Calu3 (cell line): ENCODE measurements at regions of chr6 and their contacts with region 1.

Region 1: DNA sequence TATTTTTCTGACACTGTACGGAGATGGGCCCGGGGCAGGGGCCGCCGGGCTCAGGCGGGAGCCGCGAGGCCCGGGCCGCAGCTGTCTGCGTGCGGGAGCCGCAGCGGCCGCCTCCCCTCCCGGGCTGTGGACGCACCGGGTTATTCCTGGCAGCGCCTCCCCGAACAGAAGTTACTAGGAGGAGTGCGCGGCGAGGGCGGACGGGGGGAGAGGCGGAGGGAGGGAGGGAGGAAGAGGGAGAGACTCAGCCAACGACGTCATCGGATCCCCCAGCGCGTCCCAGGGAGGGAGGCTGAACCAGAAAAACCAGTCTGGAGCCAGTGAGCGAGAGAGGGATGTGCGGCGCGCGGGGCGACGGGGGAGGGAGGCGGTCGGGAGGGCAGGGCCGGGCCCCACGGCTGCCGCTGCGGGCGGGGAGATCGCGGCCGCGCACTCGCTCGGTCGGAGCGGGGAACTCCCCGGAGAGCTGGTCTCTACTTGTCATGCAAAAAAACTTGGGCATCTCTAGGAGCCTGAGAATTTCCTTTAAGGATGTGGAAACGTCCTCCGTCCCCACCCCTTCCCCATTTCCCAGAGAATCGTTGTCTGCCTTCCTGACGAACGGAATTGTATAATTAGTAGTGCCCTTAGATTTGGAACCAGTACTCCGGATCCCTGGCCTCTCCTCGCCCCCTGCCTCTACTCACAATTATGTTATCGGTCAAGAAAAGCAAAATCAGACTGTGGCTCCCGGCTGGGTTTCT is 1.4 kb upstream of the HIVEP2 start:
- DNase-seq: peak; percentile 94
- H3K4me3 Mint-ChIP-seq: peak overlapping the region; percentile 98
- H3K27ac Mint-ChIP-seq: peak overlapping the region; percentile 79
- H3K4me1 Mint-ChIP-seq: peaks cover 23% of the 10 kb centered on the region
- H3K27me3 Mint-ChIP-seq: no peaks in the 10 kb centered on the region
- CTCF ChIP-seq: no peak

Region 2: GRCh38 chr6:142802124-142802523 is 144.2 kb before region 1 on chr6:
- CTCF ChIA-PET with region 1: no interaction called
- intact Hi-C with region 1: no loop called
- DNase-seq: peak; percentile 37
- H3K4me3 Mint-ChIP-seq: no peak overlapping the region
- H3K27ac Mint-ChIP-seq: no peak overlapping the region
- H3K4me1 Mint-ChIP-seq: peaks cover 18% of the 10 kb centered on the region
- H3K27me3 Mint-ChIP-seq: no peaks in the 10 kb centered on the region
- CTCF ChIP-seq: no peak

Region 3: DNA sequence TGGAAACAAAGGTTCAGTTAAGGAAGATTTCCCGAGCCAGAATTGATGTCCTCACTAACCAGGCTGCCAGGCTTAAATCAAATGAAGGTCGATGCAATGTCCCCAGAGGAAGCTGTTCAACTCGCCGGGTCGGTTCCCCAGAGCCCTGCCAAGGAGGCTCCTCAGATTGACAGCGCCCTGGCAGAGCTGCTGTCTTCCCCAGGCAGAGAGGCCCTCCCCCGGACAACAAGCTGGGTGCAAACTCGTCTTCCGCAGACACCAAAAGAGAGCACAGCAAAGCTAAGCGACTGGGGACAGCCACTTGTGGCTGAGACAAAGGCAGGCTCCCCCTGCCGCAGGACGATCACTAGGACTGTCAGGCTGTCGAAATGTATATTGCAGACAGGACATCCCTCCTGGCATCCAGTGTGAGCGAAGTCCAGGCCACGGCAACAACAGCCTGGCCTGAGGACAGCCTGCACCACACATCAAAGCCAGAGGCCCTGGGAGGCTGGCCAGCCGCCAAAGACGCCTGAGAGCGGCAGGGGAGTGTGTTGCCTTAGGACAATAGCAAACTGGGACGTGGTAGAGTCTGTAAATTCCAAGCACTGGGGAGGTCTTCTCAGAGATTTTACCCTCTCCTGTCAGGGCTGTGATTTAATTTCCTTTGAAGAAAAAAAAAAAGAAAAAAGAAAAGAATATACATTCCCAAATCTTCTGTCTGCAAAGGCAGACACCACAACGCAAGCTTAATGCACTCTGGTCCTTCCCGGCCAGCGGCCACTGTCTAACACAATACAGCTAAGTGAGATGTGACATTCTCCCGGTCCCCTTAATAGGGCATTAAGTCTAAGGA is 100.5 kb before region 1 on chr6:
- CTCF ChIA-PET with region 1: no interaction called
- intact Hi-C with region 1: loop called (anchors 10 kb)
- DNase-seq: peak; percentile 78
- H3K4me3 Mint-ChIP-seq: peak overlapping the region; percentile 66
- H3K27ac Mint-ChIP-seq: peak overlapping the region; percentile 93
- H3K4me1 Mint-ChIP-seq: peaks cover 82% of the 10 kb centered on the region
- H3K27me3 Mint-ChIP-seq: no peaks in the 10 kb centered on the region
- CTCF ChIP-seq: no peak

Region 4: GRCh38 chr6:142871910-142872331 is 74.4 kb before region 1 on chr6:
- CTCF ChIA-PET with region 1: no interaction called
- intact Hi-C with region 1: loop called (anchors 1 kb)
- DNase-seq: peak; percentile 66
- H3K4me3 Mint-ChIP-seq: peak overlapping the region; percentile 57
- H3K27ac Mint-ChIP-seq: peak overlapping the region; percentile 97
- H3K4me1 Mint-ChIP-seq: peaks cover 86% of the 10 kb centered on the region
- H3K27me3 Mint-ChIP-seq: no peaks in the 10 kb centered on the region
- CTCF ChIP-seq: no peak

Region 5: GRCh38 chr6:142885182-142885867 is 61.0 kb before region 1 on chr6:
- CTCF ChIA-PET with region 1: interaction called, 3 read pairs
- intact Hi-C with region 1: loop called (anchors 5 kb)
- DNase-seq: peak; percentile 71
- H3K4me3 Mint-ChIP-seq: peak overlapping the region; percentile 47
- H3K27ac Mint-ChIP-seq: peak overlapping the region; percentile 80
- H3K4me1 Mint-ChIP-seq: peaks cover 38% of the 10 kb centered on the region
- H3K27me3 Mint-ChIP-seq: no peaks in the 10 kb centered on the region
- CTCF ChIP-seq: no peak

Region 6: GRCh38 chr6:142902636-142903053 is 43.7 kb before region 1 on chr6:
- CTCF ChIA-PET with region 1: no interaction called
- intact Hi-C with region 1: loop called (anchors 5 kb)
- DNase-seq: peak; percentile 74
- H3K4me3 Mint-ChIP-seq: peak overlapping the region; percentile 20
- H3K27ac Mint-ChIP-seq: peak overlapping the region; percentile 80
- H3K4me1 Mint-ChIP-seq: no peaks in the 10 kb centered on the region
- H3K27me3 Mint-ChIP-seq: no peaks in the 10 kb centered on the region
- CTCF ChIP-seq: no peak

Region 7: DNA sequence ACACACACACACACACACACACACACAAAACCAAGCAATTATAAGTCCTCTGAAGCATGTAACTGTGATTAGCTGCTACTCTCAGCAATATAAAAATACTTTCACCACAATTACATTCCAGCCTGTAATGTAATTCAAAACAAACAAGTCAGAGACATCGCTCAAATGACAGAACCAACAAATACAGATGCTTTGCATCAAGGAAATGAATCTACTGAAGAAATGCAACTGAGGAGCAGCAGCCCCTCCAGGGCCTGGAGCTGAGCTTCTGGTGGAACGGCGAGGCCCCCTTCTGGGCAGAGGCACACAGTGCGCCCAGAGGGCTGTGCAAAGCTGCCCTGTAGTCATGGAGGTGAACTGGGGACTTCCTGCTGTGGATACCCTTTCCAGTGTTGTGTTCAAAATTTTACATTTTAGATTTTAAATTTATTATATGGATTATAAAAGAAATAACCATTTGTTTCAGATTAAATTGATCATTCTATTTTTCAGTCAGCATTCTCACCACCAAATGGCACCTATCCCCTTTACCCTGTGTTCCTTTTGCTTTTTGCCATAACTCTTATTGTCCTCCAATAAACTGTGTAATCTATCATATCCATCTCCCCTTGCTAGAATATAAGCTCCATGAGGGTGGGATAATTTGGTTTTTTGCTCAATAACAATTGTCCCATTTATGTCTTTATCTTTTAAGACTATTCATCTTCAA is 480.9 kb after region 1 on chr6:
- CTCF ChIA-PET with region 1: no interaction called
- intact Hi-C with region 1: loop called (anchors 10 kb)
- DNase-seq: peak; percentile 66
- H3K4me3 Mint-ChIP-seq: no peak overlapping the region
- H3K27ac Mint-ChIP-seq: no peak overlapping the region
- H3K4me1 Mint-ChIP-seq: no peaks in the 10 kb centered on the region
- H3K27me3 Mint-ChIP-seq: no peaks in the 10 kb centered on the region
- CTCF ChIP-seq: peak; percentile 81